Psoas muscle (tissue), 8 donors: ENCODE measurements at regions of chr20 and their contacts with region 1.

Region 1: GRCh38 chr20:2984956-2985661 is 58.3 kb upstream of the GNRH2 start:
- DNase-seq: no peak
- ATAC-seq: no peak
- H3K4me3 ChIP-seq: no peak overlapping the region
- H3K27ac ChIP-seq: no peak overlapping the region
- H3K4me1 ChIP-seq: no peaks in the 10 kb centered on the region
- H3K27me3 ChIP-seq: no peaks in the 10 kb centered on the region
- CTCF ChIP-seq: no peak

Region 2: GRCh38 chr20:2873010-2873746 is 111.9 kb before region 1 on chr20 and contains the start of gene PTPRA:
- intact Hi-C with region 1: loop called in 1 of 2 experiments (anchors 10 kb)
- DNase-seq: peak; percentile 93 to 96
- ATAC-seq: peak; percentile 96 to 98 (median 96)
- H3K4me3 ChIP-seq: peak within 1 kb of the TSS; percentile 99
- H3K27ac ChIP-seq: peak within 1 kb of the TSS; percentile 86
- H3K4me1 ChIP-seq: peaks cover 24% of the 10 kb centered on the region
- H3K27me3 ChIP-seq: no peaks in the 10 kb centered on the region
- CTCF ChIP-seq: no peak
- total RNA-seq, gene PTPRA: 15.0 to 19.9 (median 18.2) TPM

Region 3: GRCh38 chr20:3218307-3218988 is 233.3 kb after region 1 on chr20:
- intact Hi-C with region 1: no loop called
- DNase-seq: peak; percentile 72 to 80
- ATAC-seq: peak; percentile 56 to 79 (median 68)
- H3K4me3 ChIP-seq: no peak overlapping the region
- H3K27ac ChIP-seq: no peak overlapping the region
- H3K4me1 ChIP-seq: peaks cover 24% of the 10 kb centered on the region
- H3K27me3 ChIP-seq: no peaks in the 10 kb centered on the region
- CTCF ChIP-seq: peak; percentile 94